ENCODE measurements at regions of chr19 and their contacts with region 1.

Region 1: DNA sequence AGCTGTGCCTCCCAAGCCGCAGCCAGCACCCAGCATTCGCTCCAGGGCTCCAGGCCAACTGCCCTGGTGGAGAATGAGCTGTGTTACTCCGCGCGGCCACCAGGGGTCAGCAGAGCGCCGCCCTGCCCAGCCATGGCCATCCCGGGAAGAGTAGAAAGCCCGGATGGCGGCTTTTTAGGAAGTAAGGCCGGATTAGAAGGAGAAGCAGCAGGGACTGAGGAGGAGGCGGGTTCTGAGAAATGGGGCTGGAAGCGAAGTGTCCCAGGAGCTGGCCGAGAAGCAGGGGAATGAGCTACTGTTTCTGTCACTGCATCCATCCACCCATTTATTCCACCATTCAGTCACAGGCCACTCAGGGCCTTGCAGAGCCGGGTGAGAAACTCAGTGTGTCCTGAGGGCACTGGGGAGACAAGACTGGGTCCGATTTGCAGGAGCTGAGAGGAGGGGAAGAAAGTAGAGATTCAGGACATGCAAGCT is 6.6 kb upstream of the NPAS1 start:
- DNase-seq: peak; percentile 51
- ATAC-seq: peak; percentile 99
- H3K4me3 ChIP-seq: no peak overlapping the region
- H3K27ac ChIP-seq: no peak overlapping the region
- H3K4me1 ChIP-seq: no peaks in the 10 kb centered on the region
- H3K27me3 ChIP-seq: no peaks in the 10 kb centered on the region
- CTCF ChIP-seq: peak; percentile 98
- POLR2A ChIP-seq: no peak
- RAD21 ChIP-seq: peak; percentile 91

Region 2: GRCh38 chr19:46890423-46891170 is 122.5 kb before region 1 on chr19:
- CTCF ChIA-PET with region 1: no interaction called
- POLR2A ChIA-PET with region 1: no interaction called
- dilution Hi-C with region 1: no loop called
- in situ Hi-C with region 1: no loop called
- intact Hi-C with region 1: no loop called
- DNase-seq: peak; percentile 92
- ATAC-seq: peak; percentile 97
- H3K4me3 ChIP-seq: no peak overlapping the region
- H3K27ac ChIP-seq: peak overlapping the region; percentile 57
- H3K4me1 ChIP-seq: peaks cover 6% of the 10 kb centered on the region
- H3K27me3 ChIP-seq: no peaks in the 10 kb centered on the region
- CTCF ChIP-seq: no peak
- POLR2A ChIP-seq: no peak
- RAD21 ChIP-seq: peak; percentile 11; the same call in 1 of the 2 replicates

Region 3: GRCh38 chr19:47124937-47125668 is 112.0 kb after region 1 on chr19:
- CTCF ChIA-PET with region 1: interaction called, 5 read pairs
- POLR2A ChIA-PET with region 1: no interaction called
- dilution Hi-C with region 1: no loop called
- in situ Hi-C with region 1: loop called (anchors 10 kb)
- intact Hi-C with region 1: loop called (anchors 1 kb)
- DNase-seq: peak; percentile 78
- ATAC-seq: peak; percentile 71
- H3K4me3 ChIP-seq: no peak overlapping the region
- H3K27ac ChIP-seq: no peak overlapping the region
- H3K4me1 ChIP-seq: peaks cover 5% of the 10 kb centered on the region
- H3K27me3 ChIP-seq: no peaks in the 10 kb centered on the region
- CTCF ChIP-seq: peak; percentile 83
- POLR2A ChIP-seq: no peak
- RAD21 ChIP-seq: peak; percentile 76

Region 4: DNA sequence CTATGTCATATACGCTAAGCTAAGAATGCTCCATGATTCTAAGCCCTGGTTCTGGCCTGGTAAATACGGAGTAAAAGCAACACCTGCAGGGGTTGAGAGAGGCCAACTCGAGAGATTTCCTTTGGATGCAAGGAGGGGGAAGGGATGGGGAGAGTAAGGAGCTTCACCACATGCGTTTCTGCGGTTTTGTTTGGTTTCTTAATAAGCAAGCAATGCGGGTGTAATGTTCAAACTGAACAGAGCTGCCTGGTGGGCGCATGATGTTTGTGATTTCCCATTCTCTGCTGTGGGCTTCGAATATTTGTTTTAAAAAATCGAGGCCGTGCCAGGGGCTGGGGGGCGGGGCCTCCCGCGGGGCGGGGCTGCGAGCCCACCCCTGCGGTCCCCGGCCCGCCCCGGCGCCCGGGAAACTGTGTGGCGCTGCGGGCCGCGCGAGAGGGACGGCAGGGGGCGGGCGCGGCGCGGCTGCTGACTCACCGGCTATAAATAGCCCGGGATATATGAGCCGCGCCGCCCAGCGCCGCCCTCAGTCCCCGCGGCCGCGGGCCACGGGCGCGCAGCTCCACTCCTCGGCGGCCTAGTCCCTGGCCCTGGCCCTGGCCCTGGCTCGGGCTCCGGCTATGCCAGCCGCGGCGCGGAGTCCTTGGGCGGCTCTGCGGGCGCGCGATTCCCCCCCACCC is 212.8 kb after region 1 on chr19:
- CTCF ChIA-PET with region 1: no interaction called
- POLR2A ChIA-PET with region 1: interaction called, 11 read pairs
- dilution Hi-C with region 1: no loop called
- in situ Hi-C with region 1: no loop called
- intact Hi-C with region 1: no loop called
- DNase-seq: peak; percentile 84
- ATAC-seq: peak; percentile 57
- H3K4me3 ChIP-seq: peak overlapping the region; percentile 1
- H3K27ac ChIP-seq: peak overlapping the region; percentile 97
- H3K4me1 ChIP-seq: peaks cover 19% of the 10 kb centered on the region
- H3K27me3 ChIP-seq: no peaks in the 10 kb centered on the region
- CTCF ChIP-seq: peak; percentile 39
- POLR2A ChIP-seq: peak; percentile 99
- RAD21 ChIP-seq: no peak

Measured in IMR-90 (cell line).